ENCODE measurements at regions of chr15 and their contacts with region 1.

Region 1: DNA sequence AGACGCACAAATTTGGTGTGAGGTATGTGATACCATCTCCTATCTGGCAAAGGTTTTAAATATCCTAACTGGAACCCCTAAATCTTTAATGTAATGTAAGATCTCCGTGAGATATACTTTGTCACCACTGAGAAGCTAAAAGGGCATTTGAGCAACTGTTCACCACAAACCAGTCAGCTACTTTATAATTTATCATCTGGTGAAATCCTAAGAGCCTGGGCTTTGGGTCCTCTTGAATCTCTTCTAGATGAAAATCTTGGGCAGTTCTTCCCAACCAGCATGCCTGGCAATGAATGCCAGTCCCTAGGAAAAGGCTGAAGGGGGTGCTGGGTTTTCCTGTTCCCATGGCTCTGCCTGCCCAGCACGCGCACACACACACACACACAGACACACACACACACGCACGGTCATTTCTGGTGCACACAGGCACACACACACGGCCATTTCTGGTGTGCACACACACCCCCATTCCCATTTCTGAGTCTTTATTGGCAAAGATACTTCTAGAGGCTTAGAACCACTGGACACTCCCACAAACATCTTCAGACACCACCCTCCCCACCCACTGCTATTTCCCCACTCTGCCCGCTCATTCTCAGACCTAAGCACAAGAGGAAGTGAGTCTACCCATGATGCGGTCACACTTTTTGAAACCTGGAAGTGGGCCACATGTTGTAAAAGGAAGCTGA is 72.6 kb downstream of the MYO1E start:
- DNase-seq: peak; percentile 70
- CTCF ChIP-seq: no peak

Region 2: DNA sequence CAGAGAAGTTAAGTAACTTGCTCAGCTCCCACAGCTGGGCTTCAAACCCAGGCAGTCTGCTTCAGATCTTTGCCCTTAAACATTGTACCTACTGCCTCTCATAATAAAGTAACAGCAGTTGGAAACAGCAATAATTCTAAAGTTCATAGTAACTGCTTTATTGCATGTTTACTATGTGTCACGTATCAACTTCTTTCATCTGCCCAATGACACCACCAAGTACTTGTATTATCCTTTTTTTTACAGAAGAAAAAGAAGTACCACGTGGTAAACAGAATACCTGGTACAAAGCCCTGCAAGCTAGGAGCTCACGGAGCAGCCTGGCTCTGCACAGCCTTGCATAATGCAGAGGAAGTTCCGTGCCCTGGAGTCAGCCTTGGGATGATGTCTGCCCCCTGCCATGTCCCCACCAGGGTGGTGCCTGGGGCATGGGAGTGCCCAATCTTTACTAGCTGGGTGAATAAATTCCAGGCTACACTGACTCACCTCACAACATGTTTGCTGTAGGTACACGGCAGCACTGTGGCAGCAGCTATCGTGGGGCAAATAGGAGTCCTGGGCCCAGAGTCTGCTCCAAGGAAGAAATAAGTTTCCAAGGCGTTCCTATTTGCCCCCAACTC is 16.2 kb before region 1 on chr15:
- CTCF ChIA-PET with region 1: interaction called, 10 read pairs
- POLR2A ChIA-PET with region 1: interaction called, 3 read pairs
- DNase-seq: no peak
- CTCF ChIP-seq: no peak

Region 3: GRCh38 chr15:59688841-59689625 is 389.0 kb after region 1 on chr15 and contains the start of gene BNIP2:
- CTCF ChIA-PET with region 1: no interaction called
- POLR2A ChIA-PET with region 1: no interaction called
- DNase-seq: peak; percentile 93
- CTCF ChIP-seq: no peak

Measured in GM10248 (cell line).